ENCODE measurements at regions of chr1 and their contacts with region 1.

Region 1: DNA sequence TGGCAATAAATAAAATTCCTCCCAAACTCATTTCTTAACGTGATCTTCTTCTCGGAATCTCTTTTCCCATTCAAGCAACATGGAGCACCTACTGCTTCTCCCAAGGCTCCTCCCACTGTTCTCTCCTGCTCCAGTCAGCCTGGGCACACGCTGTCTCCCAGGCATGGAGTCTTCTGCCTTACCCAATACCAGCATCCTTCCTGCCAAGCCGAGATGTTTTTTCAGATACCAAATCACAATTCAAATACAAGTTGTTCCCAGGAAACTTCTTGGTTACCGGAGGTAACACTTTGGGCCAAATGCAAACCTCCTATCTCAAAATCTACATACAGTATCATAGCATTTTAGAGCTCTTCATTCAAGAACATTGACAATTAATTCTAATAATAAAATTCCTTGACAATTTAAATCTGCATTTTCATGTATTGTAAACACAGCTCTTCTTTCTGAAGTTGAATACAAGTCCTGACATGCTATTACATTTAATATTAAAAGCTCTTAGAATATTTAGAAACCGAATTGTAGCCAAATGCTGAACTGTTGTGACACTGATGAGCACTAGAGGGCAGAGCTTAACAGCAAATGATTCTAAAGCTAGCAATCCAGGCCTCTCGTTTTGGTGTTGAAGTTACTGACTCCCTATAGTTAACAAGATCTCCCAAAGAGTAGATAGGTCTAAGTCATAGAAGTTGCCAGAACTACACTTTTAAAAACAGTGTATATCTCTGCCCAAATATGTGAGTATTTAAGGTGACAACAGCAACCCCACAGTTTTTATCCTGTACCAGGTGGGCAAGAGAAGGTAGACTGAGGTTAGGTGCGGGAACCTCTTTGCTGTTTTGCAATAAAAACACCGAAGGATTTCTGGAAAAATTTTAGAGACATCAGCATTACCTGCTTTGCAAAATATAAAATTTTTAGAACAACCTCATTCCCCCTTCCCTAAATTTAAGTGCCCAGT is 52.3 kb downstream of the BCAR3 start:
- DNase-seq: no peak
- H3K4me3 ChIP-seq: no peak overlapping the region
- H3K27ac ChIP-seq: no peak overlapping the region
- H3K4me1 ChIP-seq: no peaks in the 10 kb centered on the region
- H3K27me3 ChIP-seq: no peaks in the 10 kb centered on the region
- CTCF ChIP-seq: peak; percentile 74 to 93 (median 83)
- POLR2A ChIP-seq: no peak

Region 2: DNA sequence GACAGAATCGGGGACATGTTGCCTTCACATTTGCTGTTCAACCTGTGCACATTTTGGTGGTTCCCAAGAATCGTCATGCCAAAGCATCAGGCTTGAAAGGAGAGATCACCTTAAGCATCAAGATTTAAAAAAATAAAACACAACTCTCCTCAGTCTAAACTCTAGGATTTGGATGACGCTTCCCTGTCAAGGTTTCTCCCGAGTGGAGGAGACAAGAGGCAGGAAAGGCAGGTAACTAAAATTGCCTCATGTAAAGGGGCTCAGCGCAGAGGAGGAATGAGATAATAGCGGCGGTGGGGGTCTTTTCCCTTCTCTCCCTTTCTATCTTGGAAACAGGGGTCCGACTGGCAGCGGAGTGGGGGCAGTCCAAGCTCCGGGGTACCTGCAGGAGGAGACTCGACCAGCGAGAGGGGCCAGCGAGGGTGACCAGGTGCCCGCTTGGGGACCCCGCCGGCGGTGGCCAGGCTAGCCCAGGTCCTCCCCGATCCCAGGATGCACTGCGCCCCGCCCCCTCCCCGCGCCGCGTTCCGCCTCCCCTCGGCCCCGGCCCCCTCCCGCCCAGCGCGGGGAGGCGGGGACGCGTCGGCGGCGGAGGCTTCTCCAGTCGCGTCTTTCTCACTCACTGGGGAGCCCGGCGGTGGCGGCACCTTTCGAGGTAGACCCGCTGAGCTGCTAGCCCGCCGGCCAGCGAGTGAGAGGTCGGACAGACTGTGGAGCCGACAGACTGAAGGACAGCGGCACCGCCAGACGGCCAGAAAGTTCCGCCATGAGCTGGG is 181.7 kb before region 1 on chr1 and contains the start of gene FNBP1L:
- intact Hi-C with region 1: loop called (anchors 10 kb)
- DNase-seq: no peak
- H3K4me3 ChIP-seq: peak within 1 kb of the TSS; percentile 87 to 91
- H3K27ac ChIP-seq: peak within 1 kb of the TSS; percentile 93
- H3K4me1 ChIP-seq: peaks cover 14% of the 10 kb centered on the region
- H3K27me3 ChIP-seq: no peaks in the 10 kb centered on the region
- CTCF ChIP-seq: no peak
- POLR2A ChIP-seq: peak in 1 of 2 donors; percentile 41
- total RNA-seq, gene FNBP1L: 16.9 TPM

Region 3: GRCh38 chr1:93591676-93592550 is 37.5 kb before region 1 on chr1:
- intact Hi-C with region 1: no loop called
- DNase-seq: no peak
- H3K4me3 ChIP-seq: no peak overlapping the region
- H3K27ac ChIP-seq: no peak overlapping the region
- H3K4me1 ChIP-seq: peaks cover 54% of the 10 kb centered on the region
- H3K27me3 ChIP-seq: no peaks in the 10 kb centered on the region
- CTCF ChIP-seq: no peak
- POLR2A ChIP-seq: no peak

Region 4: DNA sequence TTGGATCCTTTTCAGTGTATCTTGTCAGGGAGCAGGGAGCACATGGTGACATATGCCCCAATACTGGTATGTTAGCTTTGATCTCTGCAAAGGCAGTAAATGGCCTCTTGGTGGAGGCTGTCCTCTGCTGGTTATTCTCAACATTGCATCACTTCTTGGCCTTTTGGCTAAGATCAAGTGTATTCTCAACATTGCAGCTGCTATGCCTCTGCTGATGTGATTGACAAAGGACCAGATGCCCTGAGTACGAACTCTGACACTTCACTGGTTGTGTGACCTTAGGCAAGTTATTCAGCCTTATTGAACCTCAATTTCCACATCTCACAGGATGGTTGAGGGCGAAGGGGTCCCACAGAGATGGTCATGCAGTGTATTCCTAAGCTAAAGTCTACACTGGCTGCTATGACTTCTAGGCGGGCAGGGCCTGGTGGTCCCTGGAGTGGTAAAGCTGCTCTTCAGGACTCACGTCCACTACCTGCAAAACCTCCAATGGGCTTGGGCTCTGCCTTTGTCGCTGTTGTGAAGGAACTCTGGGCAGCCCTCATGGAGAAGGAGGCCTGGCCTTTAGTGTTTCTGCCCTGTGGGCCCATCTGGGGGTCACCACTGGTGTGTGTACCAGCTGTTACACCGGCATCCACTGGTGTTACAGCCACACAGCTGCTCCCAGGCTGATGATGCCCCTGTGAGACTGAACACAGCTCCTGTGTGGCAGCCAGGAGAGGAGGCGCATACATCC is 184.8 kb after region 1 on chr1:
- intact Hi-C with region 1: loop called (anchors 5 kb)
- DNase-seq: no peak
- H3K4me3 ChIP-seq: no peak overlapping the region
- H3K27ac ChIP-seq: no peak overlapping the region
- H3K4me1 ChIP-seq: peaks cover 40% of the 10 kb centered on the region
- H3K27me3 ChIP-seq: no peaks in the 10 kb centered on the region
- CTCF ChIP-seq: peak in 2 of 3 experiments; percentile 87 to 97
- POLR2A ChIP-seq: no peak

Region 5: DNA sequence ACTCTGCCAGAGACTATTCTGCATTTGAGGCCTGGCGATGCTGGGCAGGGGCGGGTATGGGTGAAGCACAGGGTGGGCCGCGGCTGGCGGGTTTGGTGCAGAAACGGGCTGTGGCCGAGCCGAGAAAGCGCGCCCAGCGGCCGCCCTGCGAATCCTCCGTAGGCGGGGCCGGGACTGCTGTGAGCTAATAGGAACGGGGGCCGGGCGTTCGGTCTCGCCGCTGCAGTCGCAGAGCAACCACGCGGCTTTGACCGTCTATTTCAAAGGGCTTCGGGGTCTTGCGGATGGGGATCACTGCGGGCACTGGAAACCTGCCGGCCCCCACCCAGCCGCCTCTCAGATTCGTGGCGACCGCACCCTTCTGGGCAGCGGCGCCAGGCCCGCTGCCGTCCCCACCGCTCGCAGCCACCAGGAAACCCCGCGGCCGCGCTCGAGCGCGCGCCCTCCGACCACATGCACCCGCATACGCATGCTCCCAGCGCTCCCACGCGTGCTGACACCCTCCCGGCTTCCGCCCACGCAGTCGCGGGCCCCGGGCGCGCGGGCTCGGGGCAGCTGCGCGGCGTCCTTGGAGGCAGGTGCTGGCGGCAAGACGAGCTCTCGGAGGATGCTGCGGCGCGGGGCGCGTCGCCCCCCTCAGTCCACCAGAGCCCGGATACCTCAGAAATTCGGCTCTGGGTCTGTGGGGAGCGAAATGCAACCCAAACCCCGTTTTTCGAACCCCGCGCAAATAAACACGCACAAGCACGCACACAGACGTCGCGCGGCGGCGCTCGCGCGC is 217.0 kb after region 1 on chr1:
- intact Hi-C with region 1: loop called (anchors 10 kb)
- DNase-seq: peak in 1 of 2 donors; percentile 91
- H3K4me3 ChIP-seq: peak overlapping the region; percentile 76 to 82
- H3K27ac ChIP-seq: peak overlapping the region; percentile 97
- H3K4me1 ChIP-seq: peaks cover 20% of the 10 kb centered on the region
- H3K27me3 ChIP-seq: no peaks in the 10 kb centered on the region
- CTCF ChIP-seq: peak in 2 of 3 experiments; percentile 26 to 35
- POLR2A ChIP-seq: peak in 1 of 2 donors; percentile 28